ENCODE measurements at regions of chr1 and their contacts with region 1.

Region 1: DNA sequence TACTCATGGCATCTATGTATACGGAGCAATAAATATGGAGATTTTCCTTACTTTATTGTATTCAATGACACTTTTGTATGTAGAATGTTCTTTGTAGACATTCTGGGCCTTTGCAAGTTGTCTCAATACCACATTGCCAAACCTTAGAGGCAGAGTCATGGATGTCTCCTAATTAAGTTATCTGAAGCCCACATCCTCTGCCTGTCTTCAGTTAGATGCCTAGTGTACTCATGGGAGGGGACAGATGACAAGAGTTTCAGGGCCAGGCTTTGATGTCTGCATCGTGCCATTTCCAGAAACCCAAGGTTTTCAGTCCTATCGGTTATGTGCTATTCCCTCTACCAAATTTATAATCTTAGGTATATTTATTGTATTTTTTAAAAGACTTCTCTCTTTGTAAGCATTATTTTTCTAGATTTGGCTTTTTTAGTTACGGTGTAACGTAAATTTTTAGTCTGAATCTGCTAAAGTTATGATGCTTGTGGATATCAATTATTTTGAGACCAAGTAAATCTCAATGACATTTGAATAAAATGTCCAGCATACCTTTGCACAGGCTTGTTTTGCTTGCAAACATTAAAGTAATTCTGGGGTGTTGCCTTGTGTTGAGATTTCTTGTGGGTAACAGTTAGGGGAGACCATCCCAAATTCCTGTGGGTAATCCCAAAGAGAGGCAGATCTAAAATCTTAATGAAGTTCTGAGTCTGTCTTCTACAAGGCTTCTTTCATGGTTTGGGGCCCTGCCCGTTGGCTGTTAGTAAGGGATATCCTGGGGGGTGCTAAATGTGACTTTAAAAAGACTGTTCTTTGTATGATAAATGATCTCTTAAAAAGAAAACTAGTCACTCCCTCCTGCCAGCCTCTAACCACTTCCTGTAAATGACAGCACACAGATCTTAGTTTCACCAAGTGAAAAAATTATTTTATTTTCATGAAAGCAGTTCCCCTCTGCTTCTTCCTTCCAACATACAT is 8.0 kb upstream of the MACF1 start:
- DNase-seq: no peak
- H3K4me3 Mint-ChIP-seq: no peak overlapping the region
- H3K27ac Mint-ChIP-seq: peak overlapping the region; percentile 57
- H3K4me1 Mint-ChIP-seq: peaks cover 46% of the 10 kb centered on the region
- H3K27me3 Mint-ChIP-seq: no peaks in the 10 kb centered on the region
- CTCF ChIP-seq: no peak

Region 2: GRCh38 chr1:38789498-38790169 is 406.9 kb before region 1 on chr1:
- CTCF ChIA-PET with region 1: no interaction called
- intact Hi-C with region 1: no loop called
- DNase-seq: peak; percentile 27
- H3K4me3 Mint-ChIP-seq: no peak overlapping the region
- H3K27ac Mint-ChIP-seq: no peak overlapping the region
- H3K4me1 Mint-ChIP-seq: no peaks in the 10 kb centered on the region
- H3K27me3 Mint-ChIP-seq: peaks cover 79% of the 10 kb centered on the region
- CTCF ChIP-seq: no peak

Region 3: GRCh38 chr1:39127513-39127912 is 69.0 kb before region 1 on chr1:
- CTCF ChIA-PET with region 1: interaction called, 30 read pairs
- intact Hi-C with region 1: loop called (anchors 2 kb)
- DNase-seq: peak; percentile 32
- H3K4me3 Mint-ChIP-seq: no peak overlapping the region
- H3K27ac Mint-ChIP-seq: no peak overlapping the region
- H3K4me1 Mint-ChIP-seq: peaks cover 57% of the 10 kb centered on the region
- H3K27me3 Mint-ChIP-seq: no peaks in the 10 kb centered on the region
- CTCF ChIP-seq: no peak

Region 4: GRCh38 chr1:39158327-39159086 is 38.0 kb before region 1 on chr1:
- CTCF ChIA-PET with region 1: interaction called, 37 read pairs
- intact Hi-C with region 1: loop called (anchors 1 kb)
- DNase-seq: peak; percentile 86
- H3K4me3 Mint-ChIP-seq: peak overlapping the region; percentile 74
- H3K27ac Mint-ChIP-seq: peak overlapping the region; percentile 94
- H3K4me1 Mint-ChIP-seq: peaks cover 56% of the 10 kb centered on the region
- H3K27me3 Mint-ChIP-seq: no peaks in the 10 kb centered on the region
- CTCF ChIP-seq: no peak

Region 5: GRCh38 chr1:39214998-39215873 is 18.7 kb after region 1 on chr1:
- CTCF ChIA-PET with region 1: interaction called, 24 read pairs
- intact Hi-C with region 1: no loop called
- DNase-seq: no peak
- H3K4me3 Mint-ChIP-seq: no peak overlapping the region
- H3K27ac Mint-ChIP-seq: no peak overlapping the region
- H3K4me1 Mint-ChIP-seq: peaks cover 30% of the 10 kb centered on the region
- H3K27me3 Mint-ChIP-seq: no peaks in the 10 kb centered on the region
- CTCF ChIP-seq: no peak

Region 6: DNA sequence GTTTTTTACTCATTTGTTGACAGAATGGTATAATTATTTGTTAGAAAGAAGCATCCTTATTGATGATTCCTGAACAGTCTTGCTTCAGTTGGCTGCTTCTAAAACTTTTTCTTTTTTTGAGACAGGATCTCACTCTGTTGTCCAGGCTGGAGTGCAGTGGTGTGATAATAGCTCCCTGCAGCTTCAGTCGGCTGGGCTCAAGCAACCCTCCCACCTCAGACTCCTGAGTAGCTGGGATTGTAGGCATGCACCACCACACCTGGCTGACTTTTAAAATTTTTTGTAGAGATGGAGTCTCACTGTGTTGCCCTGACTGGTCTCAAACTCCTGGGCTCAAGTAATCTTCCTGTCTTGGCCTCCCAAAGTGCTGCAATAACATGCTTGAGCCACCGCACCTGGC is 46.8 kb after region 1 on chr1:
- CTCF ChIA-PET with region 1: no interaction called
- intact Hi-C with region 1: no loop called
- DNase-seq: no peak
- H3K4me3 Mint-ChIP-seq: no peak overlapping the region
- H3K27ac Mint-ChIP-seq: no peak overlapping the region
- H3K4me1 Mint-ChIP-seq: peaks cover 4% of the 10 kb centered on the region
- H3K27me3 Mint-ChIP-seq: no peaks in the 10 kb centered on the region
- CTCF ChIP-seq: no peak

Region 7: DNA sequence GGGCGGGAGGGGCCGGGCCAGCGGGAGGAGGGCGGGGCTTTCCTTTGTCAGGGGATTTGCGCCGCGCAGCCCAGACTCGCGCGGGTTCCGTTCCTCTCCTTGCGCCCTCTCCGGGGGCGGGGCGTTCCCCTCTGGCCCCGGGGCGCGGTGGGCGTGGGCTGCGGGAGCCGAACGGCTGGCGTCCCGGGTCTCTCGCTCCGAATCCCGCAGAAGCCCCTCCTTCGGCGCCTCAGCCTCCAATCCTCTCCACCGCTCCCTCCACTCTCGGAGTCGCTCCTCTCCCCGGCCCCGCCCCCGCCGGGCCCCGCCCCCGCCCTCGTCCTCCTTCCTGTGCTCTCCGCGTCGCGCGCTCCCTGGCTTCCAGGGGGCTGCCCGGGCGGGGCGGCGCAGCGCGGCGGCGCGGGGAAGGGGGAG is 212.1 kb after region 1 on chr1:
- CTCF ChIA-PET with region 1: interaction called, 3 read pairs
- intact Hi-C with region 1: loop called (anchors 10 kb)
- DNase-seq: peak; percentile 98
- H3K4me3 Mint-ChIP-seq: peak overlapping the region; percentile 95
- H3K27ac Mint-ChIP-seq: peak overlapping the region; percentile 93
- H3K4me1 Mint-ChIP-seq: peaks cover 39% of the 10 kb centered on the region
- H3K27me3 Mint-ChIP-seq: no peaks in the 10 kb centered on the region
- CTCF ChIP-seq: no peak

Measured in Calu3 (cell line).